OCI-LY7 (cell line): ENCODE measurements at regions of chrX and their contacts with region 1.

Region 1: GRCh38 chrX:13699183-13699826 is 10.4 kb downstream of the RAB9A start:
- DNase-seq: no peak
- H3K4me3 ChIP-seq: peak overlapping the region; percentile 16
- H3K27ac ChIP-seq: no peak overlapping the region
- H3K4me1 ChIP-seq: peaks cover 44% of the 10 kb centered on the region
- CTCF ChIP-seq: no peak

Region 2: DNA sequence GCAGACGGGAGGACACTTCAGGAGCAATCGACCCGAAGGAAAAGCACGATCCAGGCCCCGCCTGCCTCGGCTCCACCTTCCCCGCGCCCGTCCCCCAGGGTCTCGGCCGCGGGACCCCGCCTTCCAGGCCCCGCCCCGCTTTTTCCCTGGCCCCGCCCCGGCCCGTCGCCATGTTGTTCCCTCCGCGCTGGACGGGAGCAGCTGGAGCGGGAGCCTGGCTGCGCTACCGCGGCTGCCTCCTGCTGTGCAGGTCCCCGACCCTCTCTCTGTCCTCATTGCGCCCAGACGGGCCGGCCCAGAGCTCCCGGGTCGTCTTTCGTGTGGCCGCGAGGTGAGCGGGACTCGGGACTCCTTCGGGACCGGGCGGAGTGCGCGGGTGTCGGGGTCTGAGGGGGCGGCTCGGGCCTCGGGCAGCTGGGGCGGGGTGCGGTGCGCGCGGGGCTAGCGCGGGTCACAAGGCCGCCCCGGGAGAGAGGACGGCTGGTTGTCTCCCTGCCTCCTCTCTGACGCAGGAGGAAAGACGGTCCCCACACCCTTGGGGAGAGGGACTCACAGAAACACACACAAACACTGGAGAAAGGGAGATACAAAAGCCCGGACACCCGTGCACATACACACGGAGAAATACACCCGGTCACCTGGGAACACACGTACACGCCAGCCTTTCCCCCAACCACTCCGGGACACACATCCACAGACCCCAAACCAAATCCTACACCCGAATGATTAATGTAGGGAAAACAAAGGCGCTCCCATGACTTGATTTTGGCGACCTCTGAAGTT is 10.2 kb before region 1 on chrX and contains the start of gene RAB9A:
- CTCF ChIA-PET with region 1: no interaction called
- POLR2A ChIA-PET with region 1: interaction called, 43 read pairs
- intact Hi-C with region 1: no loop called
- DNase-seq: peak; percentile 64
- H3K4me3 ChIP-seq: peak within 1 kb of the TSS; percentile 92
- H3K27ac ChIP-seq: peak within 1 kb of the TSS; percentile 58
- H3K4me1 ChIP-seq: peaks cover 47% of the 10 kb centered on the region
- CTCF ChIP-seq: no peak
- total RNA-seq, gene RAB9A: 11.2 and 14.1 TPM in 2 replicates